Common myeloid progenitor, CD34-positive (primary cell): ENCODE measurements at regions of chr16 and their contacts with region 1.

Region 1: DNA sequence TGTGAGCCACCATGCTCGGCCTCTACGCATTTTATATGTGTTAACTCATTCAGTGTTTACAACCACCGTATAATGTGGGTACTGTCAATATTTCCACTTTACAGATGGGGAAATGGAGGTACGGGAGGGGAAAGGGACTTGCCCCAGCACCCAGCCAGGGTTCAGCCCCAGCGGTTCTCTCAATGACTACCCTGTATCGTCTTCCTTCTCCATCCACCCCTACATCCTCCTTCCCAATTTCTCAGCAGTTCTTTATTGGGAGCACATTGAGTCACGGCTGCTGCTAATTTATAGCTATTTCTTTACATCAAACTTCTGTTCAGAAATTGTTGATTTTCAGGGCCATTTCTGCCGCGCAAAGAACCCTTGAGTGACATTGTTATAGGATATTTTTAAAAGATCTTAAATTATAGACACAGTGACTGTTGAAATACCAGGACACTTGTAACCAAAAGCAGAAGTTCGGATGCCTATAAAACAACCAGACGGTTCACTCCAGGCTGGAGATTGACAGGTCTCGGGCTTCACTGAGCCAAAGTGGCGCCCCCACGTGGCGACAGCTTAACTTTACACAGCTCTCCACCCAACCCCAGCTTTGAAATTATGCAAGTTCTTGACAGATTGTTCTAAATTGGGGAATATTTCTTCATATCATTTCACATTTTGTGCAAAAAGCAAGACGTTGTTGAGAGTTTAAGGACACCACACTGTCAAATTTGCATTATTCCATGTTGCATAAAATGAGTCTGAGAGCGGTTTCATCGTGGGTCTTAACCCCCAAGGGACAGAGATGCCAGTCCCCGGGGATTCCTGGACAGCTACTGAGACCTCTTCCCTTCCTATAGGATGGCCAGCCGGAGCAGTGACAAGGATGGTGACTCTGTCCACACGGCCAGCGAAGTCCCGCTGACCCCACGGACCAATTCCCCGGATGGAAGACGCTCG is 11.8 kb downstream of the SYT17 start:
- DNase-seq: peak; percentile 64 to 92 (median 92)
- H3K4me3 ChIP-seq: no peak overlapping the region
- H3K27ac ChIP-seq: no peak overlapping the region
- H3K4me1 ChIP-seq: no peaks in the 10 kb centered on the region
- H3K27me3 ChIP-seq: peaks cover 0 to 12% (median 6%) of the 10 kb centered on the region in 5 experiments

Region 2: GRCh38 chr16:19094541-19095365 is 85.1 kb before region 1 on chr16:
- CTCF ChIA-PET with region 1: interaction called, 12 read pairs
- POLR2A ChIA-PET with region 1: no interaction called
- DNase-seq: peak in 1 of 3 donors; percentile 35
- H3K4me3 ChIP-seq: no peak overlapping the region
- H3K27ac ChIP-seq: no peak overlapping the region
- H3K4me1 ChIP-seq: no peaks in the 10 kb centered on the region
- H3K27me3 ChIP-seq: no peaks in the 10 kb centered on the region

Region 3: DNA sequence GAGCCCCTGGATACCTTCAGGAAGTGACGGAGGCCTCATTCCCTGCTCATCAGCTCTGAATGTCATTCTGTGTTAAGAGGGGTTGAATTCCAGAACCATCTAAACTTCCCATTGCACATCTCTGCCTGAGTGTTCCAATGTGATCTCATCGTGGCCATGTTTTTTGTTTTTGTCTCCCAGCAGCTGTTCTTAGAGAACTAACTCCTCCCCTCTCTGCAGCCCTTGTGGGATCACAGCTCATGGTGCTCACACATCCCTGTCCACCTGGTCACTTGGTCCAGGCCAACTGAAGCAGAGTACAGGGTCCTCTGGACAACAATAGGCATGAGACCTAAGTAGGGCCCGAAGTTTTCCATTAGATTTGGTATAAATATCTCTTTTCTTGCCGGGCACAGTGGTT is 17.7 kb before region 1 on chr16:
- CTCF ChIA-PET with region 1: interaction called, 11 read pairs
- POLR2A ChIA-PET with region 1: no interaction called
- DNase-seq: no peak
- H3K4me3 ChIP-seq: no peak overlapping the region
- H3K27ac ChIP-seq: no peak overlapping the region
- H3K4me1 ChIP-seq: no peaks in the 10 kb centered on the region
- H3K27me3 ChIP-seq: peaks cover 0 to 15% (median 11%) of the 10 kb centered on the region in 5 experiments

Region 4: GRCh38 chr16:19265380-19265930 is 85.6 kb after region 1 on chr16:
- CTCF ChIA-PET with region 1: no interaction called
- POLR2A ChIA-PET with region 1: no interaction called
- DNase-seq: no peak
- H3K4me3 ChIP-seq: no peak overlapping the region
- H3K27ac ChIP-seq: no peak overlapping the region
- H3K4me1 ChIP-seq: no peaks in the 10 kb centered on the region
- H3K27me3 ChIP-seq: no peaks in the 10 kb centered on the region